Breast epithelium (tissue), 4 donors: ENCODE measurements at regions of chr16 and their contacts with region 1.

Region 1: DNA sequence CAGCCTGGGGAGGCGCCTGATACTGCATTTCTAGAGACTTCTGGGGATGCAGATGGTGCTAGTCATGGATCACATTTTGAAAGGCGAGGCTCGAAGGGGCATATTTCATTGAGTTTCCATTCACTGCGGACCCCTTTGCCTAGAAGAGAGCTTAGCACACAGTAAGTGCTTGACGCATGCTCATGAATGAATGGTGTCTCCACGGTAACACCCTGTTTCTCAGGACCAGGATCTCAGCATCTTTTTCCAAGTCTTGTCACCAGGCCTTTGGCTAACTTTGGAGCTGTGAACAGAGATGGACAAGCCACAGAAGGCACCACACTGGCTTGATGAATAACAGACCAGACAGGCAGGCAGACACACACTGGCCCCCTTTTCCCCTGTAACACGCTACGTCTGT is 151.3 kb downstream of the FOXL1 start:
- DNase-seq: no peak
- H3K4me3 ChIP-seq: no peak overlapping the region
- H3K27ac ChIP-seq: no peak overlapping the region
- H3K4me1 ChIP-seq: no peaks in the 10 kb centered on the region
- H3K27me3 ChIP-seq: peaks cover 0 to 14% of the 10 kb centered on the region in 2 donors
- CTCF ChIP-seq: no peak
- POLR2A ChIP-seq: no peak

Region 2: GRCh38 chr16:86681031-86681756 is 48.5 kb before region 1 on chr16:
- intact Hi-C with region 1: no loop called
- DNase-seq: peak in 1 of 2 donors; percentile 79
- H3K4me3 ChIP-seq: peak overlapping the region in 2 of 3 donors; percentile 12 to 44
- H3K27ac ChIP-seq: peak overlapping the region; percentile 72 to 82
- H3K4me1 ChIP-seq: no peaks in the 10 kb centered on the region
- H3K27me3 ChIP-seq: peaks cover 0 to 8% of the 10 kb centered on the region in 2 donors
- CTCF ChIP-seq: no peak
- POLR2A ChIP-seq: no peak

Region 3: GRCh38 chr16:86702824-86703610 is 26.7 kb before region 1 on chr16:
- intact Hi-C with region 1: loop called (anchors 1 kb)
- DNase-seq: no peak
- H3K4me3 ChIP-seq: no peak overlapping the region
- H3K27ac ChIP-seq: no peak overlapping the region
- H3K4me1 ChIP-seq: no peaks in the 10 kb centered on the region
- H3K27me3 ChIP-seq: peaks cover 0 to 5% of the 10 kb centered on the region in 2 donors
- CTCF ChIP-seq: no peak
- POLR2A ChIP-seq: no peak